Psoas muscle (tissue), 8 donors: ENCODE measurements at regions of chr16 and their contacts with region 1.

Region 1: DNA sequence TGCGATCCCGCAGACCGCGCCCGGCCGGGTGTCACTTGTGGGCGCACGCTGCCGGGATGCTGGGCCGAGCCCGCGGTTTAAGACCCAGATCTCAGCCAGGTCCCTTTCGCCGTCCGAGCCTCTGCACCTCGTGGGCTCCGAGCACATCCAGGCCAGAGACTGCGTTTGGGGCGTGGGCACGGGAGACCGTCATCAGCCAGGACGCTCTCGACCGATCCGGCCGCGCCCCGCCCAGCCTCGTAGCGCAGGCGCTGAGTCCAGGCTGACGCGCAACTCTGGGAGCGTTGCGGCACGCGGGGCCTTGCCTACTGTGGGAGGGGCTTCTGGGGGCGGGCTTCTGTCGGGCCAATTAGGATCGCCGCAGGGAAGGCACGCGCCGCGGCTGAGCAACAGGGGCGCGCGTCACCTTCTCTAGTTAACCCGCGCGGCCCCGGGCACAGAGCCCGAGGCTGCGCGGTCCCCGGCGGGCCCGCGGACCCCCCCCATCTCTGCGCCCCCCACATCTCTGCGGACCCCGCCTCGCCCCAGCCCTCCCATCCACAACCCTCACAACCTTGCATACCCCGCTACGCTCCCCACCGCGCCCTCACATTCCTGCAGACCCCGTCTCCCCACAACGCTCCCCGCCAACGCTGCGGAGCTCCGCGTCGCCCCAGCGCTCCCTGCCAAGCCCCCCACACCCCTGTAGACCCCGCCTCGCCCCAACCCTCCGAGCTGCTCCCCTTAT is 722 bp upstream of the CEMP1 start:
- DNase-seq: peak; percentile 99
- ATAC-seq: peak; percentile 94 to 96 (median 95)
- H3K4me3 ChIP-seq: peak overlapping the region; percentile 73
- H3K27ac ChIP-seq: peak overlapping the region; percentile 92
- H3K4me1 ChIP-seq: peaks cover 14% of the 10 kb centered on the region
- H3K27me3 ChIP-seq: no peaks in the 10 kb centered on the region
- CTCF ChIP-seq: no peak

Region 2: DNA sequence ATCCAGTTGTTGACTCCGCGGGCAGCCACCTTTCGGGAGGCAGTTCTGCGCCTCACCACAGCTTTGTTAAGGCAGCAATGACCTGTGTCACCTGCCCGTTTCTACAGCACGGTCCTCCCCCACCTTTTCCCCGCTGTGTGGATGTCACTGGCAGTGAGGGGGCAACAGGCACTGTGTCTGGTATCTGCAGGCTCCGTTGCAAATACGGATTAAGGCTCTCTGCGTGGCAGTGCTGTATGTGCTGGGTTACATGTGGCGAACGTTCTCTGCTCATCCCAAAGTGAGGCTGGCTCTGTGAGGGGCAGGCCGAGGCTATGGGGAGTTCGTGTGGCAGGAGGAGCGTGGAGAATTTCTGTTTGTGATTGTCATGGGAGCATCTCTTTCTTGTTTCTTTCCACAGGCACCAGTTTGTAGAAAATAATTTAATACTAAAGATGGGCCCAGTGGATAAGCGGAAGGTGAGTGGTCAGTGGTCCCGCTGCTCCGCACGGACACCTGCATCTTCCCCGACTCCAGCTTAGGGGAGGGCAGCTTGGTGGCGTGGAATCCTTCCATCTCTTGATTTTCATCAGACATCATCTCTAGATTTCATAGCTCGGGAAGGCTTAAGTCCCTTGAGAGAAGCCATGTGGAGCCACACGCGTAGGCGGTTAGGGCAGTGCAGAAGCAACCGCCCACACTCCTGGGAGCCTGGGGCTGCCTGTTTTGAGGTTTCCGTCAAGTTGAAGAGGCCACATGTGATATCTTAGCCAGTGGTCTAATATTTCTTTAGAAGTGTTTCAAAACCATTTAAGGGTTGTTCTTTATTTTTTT is 63.7 kb after region 1 on chr16:
- intact Hi-C with region 1: loop called in 1 of 2 experiments (anchors 10 kb)
- DNase-seq: peak in 1 of 2 donors; percentile 56
- ATAC-seq: no peak
- H3K4me3 ChIP-seq: no peak overlapping the region
- H3K27ac ChIP-seq: peak overlapping the region; percentile 83
- H3K4me1 ChIP-seq: peaks cover 33% of the 10 kb centered on the region
- H3K27me3 ChIP-seq: no peaks in the 10 kb centered on the region
- CTCF ChIP-seq: no peak